HepG2 (cell line): ENCODE measurements at regions of chr2 and their contacts with region 1.

Region 1: GRCh38 chr2:35343135-35343534 is 1012.4 kb upstream of the CRIM1 start:
- DNase-seq: no peak
- ATAC-seq: no peak
- H3K4me3 ChIP-seq: no peak overlapping the region
- H3K27ac ChIP-seq: no peak overlapping the region
- H3K4me1 ChIP-seq: no peaks in the 10 kb centered on the region
- H3K27me3 ChIP-seq: no peaks in the 10 kb centered on the region
- CTCF ChIP-seq: peak; percentile 47
- EP300 ChIP-seq: no peak
- POLR2A ChIP-seq: no peak
- RAD21 ChIP-seq: no peak

Region 2: GRCh38 chr2:34012715-34013302 is 1330.3 kb before region 1 on chr2:
- CTCF ChIA-PET with region 1: no interaction called
- POLR2A ChIA-PET with region 1: no interaction called
- in situ Hi-C with region 1: no loop called
- intact Hi-C with region 1: loop called (anchors 10 kb)
- DNase-seq: peak; percentile 53
- ATAC-seq: peak; percentile 98
- H3K4me3 ChIP-seq: no peak overlapping the region
- H3K27ac ChIP-seq: no peak overlapping the region
- H3K4me1 ChIP-seq: no peaks in the 10 kb centered on the region
- H3K27me3 ChIP-seq: no peaks in the 10 kb centered on the region
- CTCF ChIP-seq: peak; percentile 85
- EP300 ChIP-seq: no peak
- POLR2A ChIP-seq: no peak
- RAD21 ChIP-seq: peak; percentile 68

Region 3: GRCh38 chr2:34096562-34097171 is 1246.5 kb before region 1 on chr2:
- CTCF ChIA-PET with region 1: no interaction called
- POLR2A ChIA-PET with region 1: no interaction called
- in situ Hi-C with region 1: no loop called
- intact Hi-C with region 1: loop called (anchors 1 kb)
- DNase-seq: peak; percentile 53
- ATAC-seq: peak; percentile 93
- H3K4me3 ChIP-seq: no peak overlapping the region
- H3K27ac ChIP-seq: no peak overlapping the region
- H3K4me1 ChIP-seq: no peaks in the 10 kb centered on the region
- H3K27me3 ChIP-seq: no peaks in the 10 kb centered on the region
- CTCF ChIP-seq: peak; percentile 81
- EP300 ChIP-seq: no peak
- POLR2A ChIP-seq: no peak
- RAD21 ChIP-seq: peak; percentile 52; the same call in 1 of the 2 replicates

Region 4: DNA sequence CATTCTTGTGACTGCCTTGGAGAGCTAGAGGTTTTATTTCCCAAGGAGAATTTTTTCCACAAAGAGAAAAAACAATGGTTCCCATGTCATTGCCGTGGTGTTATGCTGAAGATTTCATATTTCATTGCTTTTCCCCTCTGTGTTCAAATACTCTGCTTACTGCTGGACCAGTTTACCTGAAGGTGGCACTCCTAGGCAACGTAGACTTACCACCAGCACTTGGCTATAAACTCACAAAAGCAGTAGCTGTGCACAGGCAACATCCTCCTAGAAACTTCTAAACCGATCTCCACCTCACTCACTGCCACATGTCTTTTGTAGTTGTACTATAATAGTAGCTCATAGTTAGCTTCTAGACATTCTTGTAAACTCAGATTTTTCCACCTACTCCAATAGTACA is 307.3 kb before region 1 on chr2:
- CTCF ChIA-PET with region 1: no interaction called
- POLR2A ChIA-PET with region 1: no interaction called
- in situ Hi-C with region 1: no loop called
- intact Hi-C with region 1: loop called (anchors 10 kb)
- DNase-seq: no peak
- ATAC-seq: no peak
- H3K4me3 ChIP-seq: no peak overlapping the region
- H3K27ac ChIP-seq: no peak overlapping the region
- H3K4me1 ChIP-seq: no peaks in the 10 kb centered on the region
- H3K27me3 ChIP-seq: no peaks in the 10 kb centered on the region
- CTCF ChIP-seq: no peak
- EP300 ChIP-seq: no peak
- POLR2A ChIP-seq: no peak
- RAD21 ChIP-seq: no peak

Region 5: GRCh38 chr2:35168354-35168753 is 174.8 kb before region 1 on chr2:
- CTCF ChIA-PET with region 1: no interaction called
- POLR2A ChIA-PET with region 1: no interaction called
- in situ Hi-C with region 1: no loop called
- intact Hi-C with region 1: loop called (anchors 1 kb)
- DNase-seq: no peak
- ATAC-seq: no peak
- H3K4me3 ChIP-seq: no peak overlapping the region
- H3K27ac ChIP-seq: no peak overlapping the region
- H3K4me1 ChIP-seq: no peaks in the 10 kb centered on the region
- H3K27me3 ChIP-seq: no peaks in the 10 kb centered on the region
- CTCF ChIP-seq: no peak
- EP300 ChIP-seq: no peak
- POLR2A ChIP-seq: no peak
- RAD21 ChIP-seq: no peak

Region 6: GRCh38 chr2:35410431-35411061 is 67.4 kb after region 1 on chr2:
- CTCF ChIA-PET with region 1: no interaction called
- POLR2A ChIA-PET with region 1: no interaction called
- in situ Hi-C with region 1: no loop called
- intact Hi-C with region 1: no loop called
- DNase-seq: peak; percentile 33
- ATAC-seq: peak; percentile 79
- H3K4me3 ChIP-seq: no peak overlapping the region
- H3K27ac ChIP-seq: no peak overlapping the region
- H3K4me1 ChIP-seq: no peaks in the 10 kb centered on the region
- H3K27me3 ChIP-seq: no peaks in the 10 kb centered on the region
- CTCF ChIP-seq: peak; percentile 78
- EP300 ChIP-seq: no peak
- POLR2A ChIP-seq: no peak
- RAD21 ChIP-seq: no peak